ENCODE measurements at regions of chr15 and their contacts with region 1.

Region 1: GRCh38 chr15:75029378-75030022 is 6.1 kb downstream of the PPCDC start:
- DNase-seq: peak; percentile 95
- ATAC-seq: peak; percentile 91 to 93
- H3K4me3 ChIP-seq: peak overlapping the region; percentile 35
- H3K27ac ChIP-seq: peak overlapping the region; percentile 77
- H3K4me1 ChIP-seq: peaks cover 50% of the 10 kb centered on the region
- H3K27me3 ChIP-seq: no peaks in the 10 kb centered on the region
- CTCF ChIP-seq: peak; percentile 95

Region 2: GRCh38 chr15:74988007-74988800 is 41.3 kb before region 1 on chr15:
- intact Hi-C with region 1: no loop called
- DNase-seq: peak; percentile 52
- ATAC-seq: peak; percentile 74 to 81
- H3K4me3 ChIP-seq: no peak overlapping the region
- H3K27ac ChIP-seq: no peak overlapping the region
- H3K4me1 ChIP-seq: no peaks in the 10 kb centered on the region
- H3K27me3 ChIP-seq: peaks cover 4% of the 10 kb centered on the region
- CTCF ChIP-seq: peak; percentile 51

Region 3: DNA sequence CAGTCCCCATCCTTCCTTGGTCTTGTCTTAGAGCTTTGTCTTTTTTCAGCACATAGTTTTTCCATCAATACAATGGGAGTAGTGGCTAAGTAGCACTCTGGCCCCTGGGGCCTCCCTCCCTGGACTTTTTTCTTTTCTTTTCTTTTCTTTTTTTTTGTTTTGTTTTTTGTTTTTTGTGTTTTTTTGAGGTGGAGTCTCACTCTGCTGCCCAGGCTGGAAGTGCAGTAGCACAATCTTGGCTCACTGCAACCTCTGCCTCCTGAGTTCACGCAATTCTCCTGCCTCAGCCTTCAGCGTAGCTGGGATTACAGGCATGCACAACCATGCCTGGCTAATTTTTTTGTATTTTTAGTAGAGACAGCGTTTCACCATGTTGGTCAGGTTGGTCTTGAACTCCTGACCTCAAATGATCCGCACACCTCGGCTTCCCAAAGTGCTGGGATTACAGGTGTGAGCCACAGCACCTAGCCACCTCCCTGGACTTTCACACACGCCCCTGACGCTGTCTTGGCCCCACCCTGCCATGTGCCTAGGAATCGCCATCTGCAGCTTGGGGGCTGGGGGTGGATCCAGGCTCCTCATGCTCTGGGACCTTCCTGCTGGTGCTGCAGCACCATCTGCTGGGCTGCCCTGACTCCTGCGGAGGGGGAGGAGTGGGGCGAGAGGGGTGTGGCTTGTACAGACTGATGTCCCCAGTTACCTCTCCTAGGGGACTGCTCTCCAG is 175.0 kb after region 1 on chr15:
- intact Hi-C with region 1: loop called (anchors 5 kb)
- DNase-seq: peak; percentile 94
- ATAC-seq: peak; percentile 72 to 78
- H3K4me3 ChIP-seq: peak overlapping the region; percentile 98
- H3K27ac ChIP-seq: peak overlapping the region; percentile 99
- H3K4me1 ChIP-seq: peaks cover 54% of the 10 kb centered on the region
- H3K27me3 ChIP-seq: no peaks in the 10 kb centered on the region
- CTCF ChIP-seq: peak; percentile 98

Measured in lower lobe of right lung (tissue), 2 donors.